GM18951 (cell line): ENCODE measurements at regions of chr4 and their contacts with region 1.

Region 1: DNA sequence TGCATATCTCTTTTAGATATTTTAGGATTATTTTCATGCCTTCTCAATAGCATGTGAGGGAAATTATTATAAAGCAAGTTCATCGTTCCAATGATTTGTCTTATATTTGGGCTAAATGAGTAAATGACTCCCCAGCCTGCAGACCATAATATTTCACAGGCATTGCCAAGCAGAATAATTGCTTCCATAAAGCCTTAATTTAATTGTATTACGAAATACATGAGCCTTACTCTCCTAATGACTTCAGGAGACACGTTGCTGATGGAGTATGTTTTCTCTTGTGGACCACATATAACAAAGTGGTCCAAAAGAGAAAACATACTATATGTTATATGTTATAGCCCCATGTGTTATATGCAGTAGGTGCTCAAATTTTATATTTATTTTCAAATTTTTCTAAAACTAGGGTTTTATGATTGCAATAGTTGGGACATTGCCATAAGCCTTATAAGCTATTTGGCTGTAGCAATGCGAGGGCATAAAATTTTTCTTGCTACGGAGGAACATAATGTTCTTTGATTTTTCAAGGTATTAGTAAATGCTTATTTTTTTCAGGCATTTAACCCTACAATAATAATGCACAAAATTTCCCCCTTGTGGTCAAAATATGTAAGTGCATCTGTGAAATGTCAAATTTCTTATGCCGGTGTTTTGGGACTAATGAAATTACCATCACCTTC is 26.2 kb upstream of the TMPRSS11D start:
- POLR2A ChIP-seq: no peak

Region 2: DNA sequence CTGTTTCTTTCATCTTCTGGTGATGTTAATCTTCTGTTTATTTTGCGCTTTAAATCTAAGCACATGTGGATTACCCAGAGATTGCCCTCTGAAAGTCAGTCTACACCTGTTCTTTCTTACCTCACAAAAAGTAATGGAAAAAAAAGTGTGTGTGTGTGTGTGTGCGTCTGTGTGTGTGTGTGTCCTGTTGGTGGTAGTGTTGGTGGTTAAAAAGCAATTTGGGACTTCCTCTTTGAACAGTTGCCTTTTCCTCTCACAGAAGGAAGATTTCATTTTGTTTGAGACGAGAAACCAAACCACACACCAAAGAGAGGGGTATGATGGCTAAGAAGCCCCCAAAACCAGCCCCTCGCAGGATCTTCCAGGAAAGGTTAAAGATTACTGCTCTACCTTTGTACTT is 351.6 kb before region 1 on chr4 and contains the start of gene STAP1:
- in situ Hi-C with region 1: loop called (anchors 25 kb)
- POLR2A ChIP-seq: peak; percentile 30